Activated CD8-positive, alpha-beta memory T cell treated with anti-CD3 and anti-CD28 coated beads, Interleukin-2, amount 10 ng/mL, durations not matched to agents 7 days and 5 days (primary cell): ENCODE measurements at regions of chr19 and their contacts with region 1.

Region 1: GRCh38 chr19:4909897-4910593 is 744 bp downstream of the UHRF1 start:
- DNase-seq: peak; percentile 97
- ATAC-seq: peak; percentile 88
- H3K4me3 Mint-ChIP-seq: peak overlapping the region; percentile 79
- H3K27ac Mint-ChIP-seq: peak overlapping the region; percentile 82
- H3K4me1 Mint-ChIP-seq: peaks cover 45% of the 10 kb centered on the region
- H3K27me3 Mint-ChIP-seq: no peaks in the 10 kb centered on the region

Region 2: GRCh38 chr19:4867534-4868285 is 42.3 kb before region 1 on chr19 and contains the start of gene PLIN3:
- CTCF ChIA-PET with region 1: interaction called, 240 read pairs
- DNase-seq: peak; percentile 94
- ATAC-seq: peak; percentile 94
- H3K4me3 Mint-ChIP-seq: peak within 1 kb of the TSS; percentile 74
- H3K27ac Mint-ChIP-seq: peak within 1 kb of the TSS; percentile 65
- H3K4me1 Mint-ChIP-seq: peaks cover 19% of the 10 kb centered on the region
- H3K27me3 Mint-ChIP-seq: peaks cover 3% of the 10 kb centered on the region
- total RNA-seq, gene PLIN3: 29.0 to 32.4 TPM

Region 3: GRCh38 chr19:4968462-4969291 is 58.6 kb after region 1 on chr19 and contains the start of gene KDM4B:
- CTCF ChIA-PET with region 1: interaction called, 15 read pairs
- DNase-seq: peak; percentile 99
- ATAC-seq: peak; percentile 96
- H3K4me3 Mint-ChIP-seq: peak within 1 kb of the TSS; percentile 87
- H3K27ac Mint-ChIP-seq: peak within 1 kb of the TSS; percentile 93
- H3K4me1 Mint-ChIP-seq: peaks cover 38% of the 10 kb centered on the region
- H3K27me3 Mint-ChIP-seq: no peaks in the 10 kb centered on the region
- total RNA-seq, gene KDM4B: 31.2 to 42.3 TPM